ENCODE measurements at regions of chr11 and their contacts with region 1.

Region 1: DNA sequence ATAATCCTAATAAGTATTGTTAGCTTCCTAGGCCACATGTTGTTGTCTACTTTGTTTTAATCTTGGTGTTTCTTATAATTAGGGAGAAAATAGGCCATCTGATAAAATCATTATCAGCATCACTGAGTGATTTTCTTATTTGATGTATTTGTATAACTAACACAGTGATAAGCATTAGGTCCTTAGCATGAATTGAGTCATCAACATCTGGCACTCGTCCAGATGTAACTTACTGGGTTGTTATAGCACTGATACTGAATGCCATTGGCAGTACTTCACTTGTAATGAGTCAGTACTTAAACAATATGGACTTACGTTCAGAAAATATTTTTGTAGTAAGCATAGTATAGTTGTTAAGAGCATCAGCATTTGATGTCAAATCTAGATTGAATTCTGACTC is 16.2 kb downstream of the API5 start:
- DNase-seq: peak in 3 of 4 donors; percentile 7 to 59 (median 38)
- ATAC-seq: no peak
- H3K4me3 ChIP-seq: no peak overlapping the region
- H3K27ac ChIP-seq: no peak overlapping the region
- H3K4me1 ChIP-seq: peaks cover 3% of the 10 kb centered on the region
- H3K27me3 ChIP-seq: no peaks in the 10 kb centered on the region
- CTCF ChIP-seq: no peak
- POLR2A ChIP-seq: no peak

Region 2: DNA sequence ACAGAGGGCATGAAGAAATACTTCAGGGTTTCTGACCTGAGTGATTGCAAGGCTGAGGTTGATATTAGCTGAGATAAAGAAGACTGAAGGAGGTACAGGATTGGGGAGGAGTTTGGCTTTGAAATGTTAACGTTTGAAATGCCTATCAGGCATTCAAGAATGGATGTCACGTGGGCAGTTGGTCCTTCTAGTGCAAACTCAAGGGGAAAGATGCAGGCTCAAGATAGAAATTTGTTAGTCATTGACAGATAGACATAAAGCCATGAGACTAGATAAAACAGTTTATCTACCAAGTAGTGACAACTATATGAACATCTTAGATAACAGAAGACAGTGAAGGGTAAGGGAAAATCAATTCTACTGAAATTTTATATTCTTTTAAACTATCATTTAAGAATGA is 53.8 kb after region 1 on chr11:
- intact Hi-C with region 1: no loop called
- DNase-seq: no peak
- ATAC-seq: no peak
- H3K4me3 ChIP-seq: no peak overlapping the region
- H3K27ac ChIP-seq: no peak overlapping the region
- H3K4me1 ChIP-seq: peaks cover 24% of the 10 kb centered on the region
- H3K27me3 ChIP-seq: no peaks in the 10 kb centered on the region
- CTCF ChIP-seq: no peak
- POLR2A ChIP-seq: no peak

Region 3: GRCh38 chr11:43399983-43400630 is 72.1 kb after region 1 on chr11:
- intact Hi-C with region 1: loop called (anchors 10 kb)
- DNase-seq: no peak
- ATAC-seq: no peak
- H3K4me3 ChIP-seq: no peak overlapping the region
- H3K27ac ChIP-seq: no peak overlapping the region
- H3K4me1 ChIP-seq: peaks cover 4% of the 10 kb centered on the region
- H3K27me3 ChIP-seq: no peaks in the 10 kb centered on the region
- CTCF ChIP-seq: no peak
- POLR2A ChIP-seq: no peak

Measured in body of pancreas (tissue), 4 donors.